Heart right ventricle (tissue), 16 donors: ENCODE measurements at regions of chr10 and their contacts with region 1.

Region 1: DNA sequence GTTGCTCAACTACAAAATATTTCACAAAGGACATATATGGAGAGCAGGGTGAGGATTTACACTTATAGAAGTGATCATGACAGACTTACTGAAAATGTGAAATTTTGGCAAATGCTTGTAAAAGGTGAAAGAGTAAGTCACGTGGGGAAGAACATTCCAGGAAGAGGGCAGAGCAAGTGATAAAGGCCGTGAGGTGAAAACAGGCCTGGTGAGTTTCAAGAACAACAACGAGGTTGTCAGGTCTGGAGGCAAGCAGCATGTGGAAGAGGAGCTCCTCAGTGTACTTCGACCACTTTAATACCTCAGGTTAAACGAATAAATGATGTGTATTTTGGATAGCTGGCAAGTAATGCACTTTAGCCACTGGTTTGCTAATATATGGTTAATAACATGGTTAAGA is 706.7 kb downstream of the PCDH15 start:
- DNase-seq: no peak
- ATAC-seq: peak in 1 of 8 donors; percentile 48
- H3K4me3 ChIP-seq: no peak overlapping the region
- H3K27ac ChIP-seq: no peak overlapping the region
- H3K4me1 ChIP-seq: no peaks in the 10 kb centered on the region
- H3K27me3 ChIP-seq: no peaks in the 10 kb centered on the region
- CTCF ChIP-seq: no peak

Region 2: DNA sequence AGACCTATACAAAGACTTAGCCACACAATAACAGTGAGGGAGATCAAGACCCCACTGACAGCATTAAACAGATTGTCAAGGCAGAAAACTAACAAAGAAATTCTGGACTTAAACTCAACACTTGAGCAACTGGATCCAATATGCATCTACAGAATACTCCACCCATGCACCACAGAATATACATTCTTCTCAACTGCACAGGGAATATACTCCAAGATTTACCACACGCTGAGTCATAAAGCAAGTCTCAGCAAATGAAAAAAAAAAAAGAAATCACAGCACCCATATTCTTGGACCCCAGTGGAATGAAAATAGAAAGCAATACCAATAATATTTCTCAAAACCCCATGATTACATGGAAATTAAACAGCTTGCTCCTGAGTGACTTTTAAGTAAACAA is 26.5 kb after region 1 on chr10:
- intact Hi-C with region 1: loop called in 1 of 10 experiments (anchors 1 kb)
- DNase-seq: no peak
- ATAC-seq: no peak
- H3K4me3 ChIP-seq: no peak overlapping the region
- H3K27ac ChIP-seq: no peak overlapping the region
- H3K4me1 ChIP-seq: no peaks in the 10 kb centered on the region
- H3K27me3 ChIP-seq: no peaks in the 10 kb centered on the region
- CTCF ChIP-seq: no peak